Activated CD8-positive, alpha-beta T cell treated with anti-CD3 and anti-CD28 coated beads, Interleukin-2, amount 10 ng/mL, durations not matched to agents 7 days and 5 days (primary cell): ENCODE measurements at regions of chr11 and their contacts with region 1.

Region 1: GRCh38 chr11:65637794-65638317 is at the start of gene SIPA1:
- DNase-seq: peak; percentile 72
- ATAC-seq: peak; percentile 55
- H3K4me3 Mint-ChIP-seq: peak within 1 kb of the TSS; percentile 98
- H3K27ac Mint-ChIP-seq: peak within 1 kb of the TSS; percentile 98
- H3K4me1 Mint-ChIP-seq: peaks cover 68% of the 10 kb centered on the region
- H3K27me3 Mint-ChIP-seq: no peaks in the 10 kb centered on the region
- total RNA-seq, gene SIPA1: 245 to 274 TPM

Region 2: DNA sequence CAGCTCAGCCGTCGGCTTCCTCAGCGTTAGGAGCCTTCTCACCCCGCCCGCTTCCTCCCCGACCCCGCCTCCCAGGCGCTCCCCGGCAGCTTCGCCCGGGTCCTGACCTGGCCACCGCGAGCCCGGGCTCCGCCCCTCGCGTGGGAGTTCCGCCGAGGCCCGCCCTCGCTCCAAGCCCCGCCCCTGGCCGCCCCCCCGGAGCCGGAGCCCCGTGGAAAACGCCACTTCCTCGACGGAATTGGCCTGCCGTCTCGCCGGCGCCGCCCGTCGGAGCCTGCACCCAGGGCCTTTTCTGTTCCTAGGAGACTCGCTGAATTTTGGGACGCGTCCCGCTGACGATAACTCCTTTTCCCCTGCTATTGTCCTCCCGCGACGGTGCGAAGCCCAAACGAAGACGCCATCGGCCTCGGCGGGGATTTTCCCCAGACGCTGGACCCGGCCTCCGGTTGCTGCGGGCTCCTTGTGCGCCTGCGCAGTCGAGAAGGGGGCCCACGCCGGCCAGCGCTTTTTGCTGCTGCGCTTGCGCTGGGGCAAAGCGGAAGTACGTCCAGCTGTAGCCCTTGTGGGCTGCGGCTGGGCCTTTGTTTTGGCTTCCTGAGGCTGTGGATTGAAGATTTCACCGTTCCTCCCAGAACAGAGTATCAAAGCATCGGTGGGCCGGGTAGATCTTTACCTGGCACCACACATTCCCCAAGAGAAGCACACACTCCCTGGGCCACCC is 14.8 kb after region 1 on chr11:
- CTCF ChIA-PET with region 1: interaction called, 25 read pairs
- POLR2A ChIA-PET with region 1: interaction called, 50 read pairs
- DNase-seq: peak; percentile 96
- ATAC-seq: peak; percentile 90
- H3K4me3 Mint-ChIP-seq: peak overlapping the region; percentile 77
- H3K27ac Mint-ChIP-seq: peak overlapping the region; percentile 90
- H3K4me1 Mint-ChIP-seq: peaks cover 48% of the 10 kb centered on the region
- H3K27me3 Mint-ChIP-seq: no peaks in the 10 kb centered on the region